Transverse colon (tissue), 4 donors: ENCODE measurements at regions of chr7 and their contacts with region 1.

Region 1: DNA sequence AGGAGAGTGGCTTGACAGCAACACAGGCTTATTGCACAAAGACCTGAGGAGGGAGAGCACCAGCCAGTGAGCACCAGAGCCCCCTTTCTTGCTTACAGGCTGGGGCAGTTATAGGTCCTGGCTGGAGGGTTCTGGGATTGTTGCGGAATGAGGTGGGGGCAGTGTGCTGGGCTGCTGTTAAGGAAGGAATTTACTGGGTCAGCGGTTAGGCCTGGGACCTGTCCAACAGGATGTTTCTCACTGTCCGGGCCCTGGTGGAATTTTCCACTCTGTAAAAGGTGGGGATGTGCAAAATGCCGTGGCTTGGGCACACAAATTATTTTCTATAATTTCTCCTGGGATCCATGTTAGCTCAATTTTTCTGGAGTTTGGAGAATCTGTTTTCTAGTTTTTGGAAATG is 757.3 kb downstream of the TYW1 start:
- DNase-seq: no peak
- H3K4me3 ChIP-seq: no peak overlapping the region
- H3K27ac ChIP-seq: no peak overlapping the region
- H3K4me1 ChIP-seq: no peaks in the 10 kb centered on the region
- H3K27me3 ChIP-seq: no peaks in the 10 kb centered on the region
- CTCF ChIP-seq: no peak
- EP300 ChIP-seq: no peak
- POLR2A ChIP-seq: no peak

Region 2: GRCh38 chr7:67377939-67378862 is 375.7 kb before region 1 on chr7:
- in situ Hi-C with region 1: no loop called
- intact Hi-C with region 1: no loop called
- DNase-seq: peak; percentile 45
- H3K4me3 ChIP-seq: no peak overlapping the region
- H3K27ac ChIP-seq: no peak overlapping the region
- H3K4me1 ChIP-seq: no peaks in the 10 kb centered on the region
- H3K27me3 ChIP-seq: no peaks in the 10 kb centered on the region
- CTCF ChIP-seq: peak; percentile 67 to 83 (median 80)
- EP300 ChIP-seq: no peak
- POLR2A ChIP-seq: no peak

Region 3: DNA sequence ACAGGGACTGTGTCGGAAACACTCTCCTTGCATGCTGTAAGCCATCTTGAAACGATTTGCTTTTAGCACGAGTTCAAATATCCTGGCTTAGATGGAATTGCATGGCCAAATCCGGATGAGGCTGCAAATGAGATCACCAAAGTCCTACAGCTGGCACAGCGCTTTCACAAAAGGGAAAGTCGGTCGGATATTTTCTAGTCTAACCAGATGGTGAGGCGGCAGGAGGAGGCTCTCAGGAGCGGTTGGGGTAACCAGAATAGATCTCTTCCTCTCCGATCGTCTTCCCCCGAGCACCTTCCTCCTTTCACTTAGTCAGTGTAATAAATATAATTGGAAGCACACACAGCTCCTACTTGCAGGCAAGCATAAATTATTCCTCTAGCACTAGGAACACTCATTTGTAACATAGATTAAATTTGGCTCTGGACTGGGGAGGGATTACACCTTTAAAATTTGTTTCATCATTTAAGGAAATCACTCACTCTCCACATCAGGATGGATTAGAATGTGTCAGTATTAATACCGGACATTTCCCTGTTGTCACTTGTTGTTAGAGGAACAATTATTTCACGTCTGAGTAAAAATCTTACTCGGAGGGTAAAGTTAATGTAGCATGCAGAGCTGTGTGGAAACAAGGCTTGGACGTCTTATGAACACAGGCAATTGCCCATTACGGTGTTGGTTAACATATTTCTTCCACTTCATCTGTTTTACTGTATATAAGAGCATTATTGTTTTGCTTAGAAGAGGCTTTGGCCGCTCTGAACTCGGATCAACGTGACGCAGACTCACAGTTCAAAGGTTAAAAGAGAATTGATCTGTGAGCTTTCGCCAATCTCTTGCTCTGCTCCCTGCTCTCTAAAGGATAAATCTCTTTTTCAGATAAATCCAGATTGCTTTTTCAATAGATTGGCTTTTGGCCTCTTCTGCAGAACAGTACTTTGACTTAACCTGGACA is 100.6 kb after region 1 on chr7:
- in situ Hi-C with region 1: loop called in 1 of 4 experiments (anchors 25 kb)
- intact Hi-C with region 1: no loop called
- DNase-seq: no peak
- H3K4me3 ChIP-seq: no peak overlapping the region
- H3K27ac ChIP-seq: no peak overlapping the region
- H3K4me1 ChIP-seq: no peaks in the 10 kb centered on the region
- H3K27me3 ChIP-seq: no peaks in the 10 kb centered on the region
- CTCF ChIP-seq: no peak
- EP300 ChIP-seq: no peak
- POLR2A ChIP-seq: no peak

Region 4: DNA sequence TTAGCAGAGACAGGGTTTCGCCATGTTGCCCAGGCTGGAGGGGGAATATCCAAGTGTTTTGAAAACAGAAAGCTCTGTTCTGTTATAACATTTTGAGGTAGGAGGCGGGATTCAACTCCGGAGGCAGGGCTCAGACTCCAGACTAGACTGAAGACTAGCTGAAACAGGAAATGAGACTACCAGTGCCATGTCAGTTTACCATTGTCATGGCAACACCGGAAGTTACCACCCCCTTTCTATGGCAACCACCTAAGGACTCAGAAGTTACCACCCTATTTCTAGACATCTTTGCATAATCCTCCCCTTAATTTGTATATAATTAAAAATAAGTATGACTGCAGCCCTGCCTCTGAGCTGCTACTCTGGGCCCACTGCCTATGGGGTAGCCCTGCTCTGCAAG is 775.3 kb after region 1 on chr7:
- in situ Hi-C with region 1: no loop called
- intact Hi-C with region 1: no loop called
- DNase-seq: no peak
- H3K4me3 ChIP-seq: no peak overlapping the region
- H3K27ac ChIP-seq: no peak overlapping the region
- H3K4me1 ChIP-seq: no peaks in the 10 kb centered on the region
- H3K27me3 ChIP-seq: no peaks in the 10 kb centered on the region
- CTCF ChIP-seq: no peak
- EP300 ChIP-seq: no peak
- POLR2A ChIP-seq: no peak